IMR-90 (cell line): ENCODE measurements at regions of chr21 and their contacts with region 1.

Region 1: DNA sequence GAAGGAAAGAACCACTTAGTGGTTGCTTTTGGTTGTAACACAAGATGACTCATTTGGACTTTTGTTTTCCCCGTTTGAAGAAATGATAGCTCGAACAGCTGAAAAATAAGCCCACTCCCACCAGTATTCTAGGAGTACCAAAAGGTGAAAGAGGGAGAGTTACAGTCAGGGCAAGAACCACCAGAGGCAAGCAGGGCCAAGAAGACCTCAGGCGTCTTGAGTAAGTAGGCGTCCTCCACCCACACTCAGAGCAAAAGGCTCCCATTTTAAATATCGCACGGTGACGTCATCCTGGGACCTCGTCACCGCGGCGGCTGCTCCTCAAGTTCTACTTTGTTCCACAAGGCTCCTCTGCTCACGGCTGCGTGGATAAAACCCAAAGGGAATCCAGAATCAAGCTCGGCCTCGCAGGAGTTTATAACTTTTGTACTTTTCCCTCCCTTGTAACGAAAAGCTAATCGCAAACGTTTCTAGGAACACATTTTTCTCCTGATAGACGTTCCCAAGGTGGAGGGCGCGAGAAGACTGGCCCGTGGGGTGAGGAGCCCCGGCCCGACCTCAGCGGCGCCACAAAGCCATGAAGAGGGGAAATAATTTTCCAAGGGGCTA is 1.2 kb downstream of the BTG3 start:
- DNase-seq: peak; percentile 94
- ATAC-seq: peak; percentile 67
- H3K4me3 ChIP-seq: peak overlapping the region; percentile 71
- H3K27ac ChIP-seq: peak overlapping the region; percentile 56
- H3K4me1 ChIP-seq: peaks cover 4% of the 10 kb centered on the region
- H3K27me3 ChIP-seq: no peaks in the 10 kb centered on the region
- CTCF ChIP-seq: no peak
- POLR2A ChIP-seq: peak; percentile 77
- RAD21 ChIP-seq: no peak

Region 2: DNA sequence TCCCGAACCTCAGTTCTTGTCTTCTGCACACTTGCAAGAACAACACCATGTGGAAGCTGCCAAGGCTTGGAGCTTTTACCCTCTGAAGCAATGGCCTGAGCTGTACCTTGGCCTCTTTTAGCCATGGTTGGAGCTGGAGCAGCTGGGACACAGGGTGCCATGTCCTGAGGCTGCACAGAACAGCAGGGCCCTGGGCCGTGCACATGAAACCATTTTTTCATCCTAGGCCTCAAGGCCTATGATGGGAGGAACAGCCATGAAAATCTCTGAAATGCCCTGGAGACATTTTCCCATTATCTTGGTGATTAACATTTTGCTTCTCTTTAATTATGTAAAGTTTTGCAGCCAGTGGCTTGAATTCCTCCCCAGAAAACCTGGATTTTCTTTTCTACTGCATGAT is 916.4 kb before region 1 on chr21:
- CTCF ChIA-PET with region 1: no interaction called
- POLR2A ChIA-PET with region 1: no interaction called
- dilution Hi-C with region 1: no loop called
- in situ Hi-C with region 1: no loop called
- intact Hi-C with region 1: loop called (anchors 5 kb)
- DNase-seq: no peak
- ATAC-seq: no peak
- H3K4me3 ChIP-seq: no peak overlapping the region
- H3K27ac ChIP-seq: no peak overlapping the region
- H3K4me1 ChIP-seq: no peaks in the 10 kb centered on the region
- H3K27me3 ChIP-seq: no peaks in the 10 kb centered on the region
- CTCF ChIP-seq: no peak
- POLR2A ChIP-seq: no peak
- RAD21 ChIP-seq: no peak